PC-3 (cell line): ENCODE measurements at regions of chr5 and their contacts with region 1.

Region 1: GRCh38 chr5:112757468-112758208 is 20.0 kb downstream of the APC start:
- DNase-seq: peak; percentile 79
- ATAC-seq: peak; percentile 56
- H3K4me3 ChIP-seq: no peak overlapping the region
- H3K27ac ChIP-seq: 0 out of 2 replicates have a peak overlapping the region, but pooled peaks have one; percentile 6
- H3K4me1 ChIP-seq: peaks cover 22% of the 10 kb centered on the region
- H3K27me3 ChIP-seq: no peaks in the 10 kb centered on the region
- CTCF ChIP-seq: peak; percentile 73

Region 2: GRCh38 chr5:112551419-112552032 is 206.1 kb before region 1 on chr5:
- CTCF ChIA-PET with region 1: interaction called, 4 read pairs
- POLR2A ChIA-PET with region 1: no interaction called
- intact Hi-C with region 1: loop called (anchors 1 kb)
- DNase-seq: peak; percentile 65
- ATAC-seq: peak; percentile 55; the same call in 1 of the 2 replicates
- H3K4me3 ChIP-seq: no peak overlapping the region
- H3K27ac ChIP-seq: no peak overlapping the region
- H3K4me1 ChIP-seq: peaks cover 24% of the 10 kb centered on the region
- H3K27me3 ChIP-seq: no peaks in the 10 kb centered on the region
- CTCF ChIP-seq: peak; percentile 78

Region 3: GRCh38 chr5:112649882-112650281 is 107.8 kb before region 1 on chr5:
- CTCF ChIA-PET with region 1: no interaction called
- POLR2A ChIA-PET with region 1: no interaction called
- intact Hi-C with region 1: loop called (anchors 5 kb)
- DNase-seq: peak; percentile 93
- ATAC-seq: peak; percentile 86
- H3K4me3 ChIP-seq: no peak overlapping the region
- H3K27ac ChIP-seq: peak overlapping the region; percentile 94
- H3K4me1 ChIP-seq: peaks cover 37% of the 10 kb centered on the region
- H3K27me3 ChIP-seq: no peaks in the 10 kb centered on the region
- CTCF ChIP-seq: no peak

Region 4: DNA sequence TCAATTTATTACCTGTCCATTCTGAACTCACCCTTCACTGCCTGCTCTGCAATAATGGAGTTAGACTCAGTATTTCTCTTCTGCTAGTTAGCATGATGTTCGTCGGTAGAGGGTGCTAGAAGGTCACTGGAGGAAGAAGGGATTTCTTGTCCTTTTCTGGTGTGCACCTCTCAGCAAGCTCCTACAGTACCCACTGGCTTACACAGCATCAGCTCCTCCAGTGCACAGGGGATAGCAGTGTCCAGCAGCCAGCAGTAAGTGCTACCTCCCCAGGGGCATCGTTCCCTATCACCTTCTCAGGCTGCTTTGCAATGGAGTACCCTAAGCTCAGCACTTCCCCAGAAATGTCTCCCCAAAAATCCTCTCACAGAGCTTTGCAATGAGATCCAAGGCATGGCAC is 65.9 kb before region 1 on chr5:
- CTCF ChIA-PET with region 1: interaction called, 3 read pairs
- POLR2A ChIA-PET with region 1: no interaction called
- intact Hi-C with region 1: loop called (anchors 1 kb)
- DNase-seq: peak; percentile 40
- ATAC-seq: peak; percentile 62
- H3K4me3 ChIP-seq: no peak overlapping the region
- H3K27ac ChIP-seq: no peak overlapping the region
- H3K4me1 ChIP-seq: no peaks in the 10 kb centered on the region
- H3K27me3 ChIP-seq: no peaks in the 10 kb centered on the region
- CTCF ChIP-seq: peak; percentile 44

Region 5: DNA sequence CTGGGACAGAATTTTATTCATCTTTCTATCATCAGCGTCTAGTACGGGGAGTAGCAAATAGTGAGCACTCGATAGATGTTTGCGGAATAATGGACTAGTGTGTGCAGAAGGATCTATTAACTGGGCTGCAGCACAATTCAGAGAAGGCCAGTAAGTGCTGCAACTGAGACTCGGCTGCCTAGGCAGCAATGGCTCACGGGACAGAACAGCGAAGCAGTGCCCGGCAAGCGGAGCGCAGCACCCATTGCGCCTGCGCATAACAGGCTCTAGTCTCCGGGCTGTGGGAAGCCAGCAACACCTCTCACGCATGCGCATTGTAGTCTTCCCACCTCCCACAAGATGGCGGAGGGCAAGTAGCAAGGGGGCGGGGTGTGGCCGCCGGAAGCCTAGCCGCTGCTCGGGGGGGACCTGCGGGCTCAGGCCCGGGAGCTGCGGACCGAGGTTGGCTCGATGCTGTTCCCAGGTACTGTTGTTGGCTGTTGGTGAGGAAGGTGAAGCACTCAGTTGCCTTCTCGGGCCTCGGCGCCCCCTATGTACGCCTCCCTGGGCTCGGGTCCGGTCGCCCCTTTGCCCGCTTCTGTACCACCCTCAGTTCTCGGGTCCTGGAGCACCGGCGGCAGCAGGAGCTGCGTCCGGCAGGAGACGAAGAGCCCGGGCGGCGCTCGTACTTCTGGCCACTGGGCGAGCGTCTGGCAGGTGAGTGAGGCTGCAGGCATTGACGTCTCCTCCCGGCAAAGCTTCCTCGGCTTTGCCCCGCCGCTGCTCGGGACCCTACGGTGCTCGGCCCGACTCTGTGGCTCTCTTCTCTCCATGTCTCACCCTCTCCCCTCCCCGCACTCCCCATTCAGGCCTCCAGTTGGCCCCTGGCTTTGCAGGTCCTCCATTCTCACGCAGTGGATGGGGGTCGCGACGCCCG is 50.2 kb before region 1 on chr5:
- CTCF ChIA-PET with region 1: no interaction called
- POLR2A ChIA-PET with region 1: no interaction called
- intact Hi-C with region 1: loop called (anchors 2 kb)
- DNase-seq: peak; percentile 94
- ATAC-seq: peak; percentile 91
- H3K4me3 ChIP-seq: peak overlapping the region; percentile 99
- H3K27ac ChIP-seq: peak overlapping the region; percentile 78
- H3K4me1 ChIP-seq: peaks cover 13% of the 10 kb centered on the region
- H3K27me3 ChIP-seq: no peaks in the 10 kb centered on the region
- CTCF ChIP-seq: no peak

Region 6: DNA sequence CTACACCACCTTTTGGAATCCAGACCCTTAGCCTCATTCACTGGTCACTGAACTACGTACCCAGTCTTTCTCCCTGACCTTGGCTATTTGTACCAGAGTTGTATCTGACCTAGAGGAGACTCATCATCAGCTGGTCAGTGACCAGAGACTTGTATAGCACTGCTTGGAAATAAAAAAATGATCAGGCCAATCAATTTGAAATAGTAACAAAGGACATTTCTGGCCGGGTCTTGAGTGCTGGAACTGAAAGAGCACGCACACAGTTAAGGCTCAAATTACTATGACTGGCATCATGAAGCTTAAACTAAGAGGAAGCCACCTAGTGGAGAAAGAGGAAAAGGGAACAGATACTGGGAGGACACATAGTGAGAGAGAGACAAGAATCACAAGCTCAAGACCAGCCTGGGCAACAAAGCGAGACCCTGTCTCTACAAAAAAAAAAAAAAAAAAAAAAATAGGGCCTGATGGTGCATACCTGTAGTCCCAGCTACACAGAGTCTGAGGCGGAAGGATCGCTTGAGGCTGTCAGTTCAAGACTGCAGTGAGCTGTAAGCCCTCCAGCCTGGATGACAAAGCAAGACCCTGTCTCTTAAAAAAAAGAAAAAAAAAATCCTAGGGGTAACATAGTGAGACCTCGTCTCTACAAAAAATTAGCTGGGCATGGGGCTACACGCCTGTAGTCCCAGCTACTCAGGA is 90.6 kb after region 1 on chr5:
- CTCF ChIA-PET with region 1: no interaction called
- POLR2A ChIA-PET with region 1: no interaction called
- intact Hi-C with region 1: loop called (anchors 1 kb)
- DNase-seq: peak; percentile 66
- ATAC-seq: peak; percentile 99
- H3K4me3 ChIP-seq: no peak overlapping the region
- H3K27ac ChIP-seq: no peak overlapping the region
- H3K4me1 ChIP-seq: no peaks in the 10 kb centered on the region
- H3K27me3 ChIP-seq: no peaks in the 10 kb centered on the region
- CTCF ChIP-seq: peak; percentile 67